ENCODE measurements at regions of chr12 and their contacts with region 1.

Region 1: DNA sequence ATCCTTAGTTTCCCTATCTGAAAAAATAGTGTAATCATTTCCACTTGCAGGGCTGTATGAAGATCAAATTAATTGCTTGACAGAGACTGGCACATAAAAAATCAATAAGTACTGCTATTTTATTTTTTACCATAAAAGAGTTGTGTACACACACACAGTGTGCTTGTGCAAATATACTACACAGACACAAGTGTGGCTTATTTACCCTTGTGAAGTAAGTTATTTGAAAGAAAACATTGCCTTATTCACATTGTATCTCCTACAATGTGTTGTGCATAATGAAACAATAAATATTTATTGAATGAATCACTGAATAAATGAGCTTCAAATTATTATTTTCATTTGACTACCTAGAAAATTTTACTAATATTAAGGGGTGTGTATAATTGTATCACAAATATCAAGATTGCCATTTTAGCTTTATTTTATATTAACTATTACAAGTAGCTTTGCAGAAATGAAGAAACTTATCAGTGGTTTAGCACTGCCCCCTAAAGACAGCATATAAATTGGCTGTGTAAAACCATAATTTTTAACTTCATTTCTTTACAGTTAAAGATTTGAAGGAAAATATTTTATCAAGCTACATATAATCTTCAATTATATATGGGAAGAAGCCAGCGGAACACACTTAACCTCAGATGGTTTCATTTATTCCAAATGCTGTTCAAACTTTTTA is 11.3 kb downstream of the GARIN6 start:
- DNase-seq: peak; percentile 64
- H3K4me3 ChIP-seq: no peak overlapping the region
- H3K27ac ChIP-seq: peak overlapping the region; percentile 62
- H3K4me1 ChIP-seq: peaks cover 41% of the 10 kb centered on the region
- CTCF ChIP-seq: peak; percentile 94

Region 2: DNA sequence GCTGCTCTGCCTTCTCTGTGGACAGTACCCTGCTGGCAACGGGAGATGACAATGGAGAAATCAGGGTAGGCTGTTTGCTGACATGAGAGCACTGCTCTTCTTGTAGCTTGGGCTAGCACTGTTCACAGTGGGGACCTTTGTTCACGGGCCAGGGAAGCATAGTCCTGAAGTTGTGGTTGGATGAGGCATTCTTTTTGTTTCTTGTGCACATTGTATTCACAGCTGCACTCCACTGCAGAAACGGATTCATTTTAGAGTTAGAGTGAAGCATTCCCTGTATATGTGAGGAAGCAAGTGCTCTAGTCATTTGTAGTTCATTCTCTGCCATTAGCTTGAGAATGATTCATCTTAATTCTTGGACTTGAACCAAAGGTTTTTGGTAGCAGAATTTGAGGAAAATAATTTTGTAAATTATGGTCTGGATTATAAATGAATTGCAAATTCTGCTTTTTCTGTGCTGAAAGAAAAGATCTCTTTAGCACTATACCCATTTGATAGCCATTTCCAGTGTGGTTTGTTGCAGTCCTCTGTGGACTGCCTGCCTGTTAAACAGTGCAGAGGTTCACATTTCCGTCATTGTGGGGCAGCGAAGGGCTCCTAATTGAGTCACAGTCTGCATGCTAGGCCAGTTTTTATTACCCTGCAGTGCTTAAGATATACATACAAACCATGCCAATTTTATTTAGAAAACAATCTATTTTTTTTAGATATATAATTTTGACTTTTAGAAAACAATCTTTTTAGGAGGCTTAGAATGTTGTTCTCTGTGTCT is 933.1 kb before region 1 on chr12:
- CTCF ChIA-PET with region 1: no interaction called
- POLR2A ChIA-PET with region 1: no interaction called
- intact Hi-C with region 1: loop called (anchors 10 kb)
- DNase-seq: peak; percentile 56
- H3K4me3 ChIP-seq: no peak overlapping the region
- H3K27ac ChIP-seq: no peak overlapping the region
- H3K4me1 ChIP-seq: no peaks in the 10 kb centered on the region
- CTCF ChIP-seq: peak; percentile 82

Region 3: GRCh38 chr12:99253068-99253467 is 405.7 kb before region 1 on chr12:
- CTCF ChIA-PET with region 1: no interaction called
- POLR2A ChIA-PET with region 1: no interaction called
- intact Hi-C with region 1: loop called (anchors 2 kb)
- DNase-seq: peak; percentile 74
- H3K4me3 ChIP-seq: no peak overlapping the region
- H3K27ac ChIP-seq: no peak overlapping the region
- H3K4me1 ChIP-seq: peaks cover 12% of the 10 kb centered on the region
- CTCF ChIP-seq: peak; percentile 76

Region 4: DNA sequence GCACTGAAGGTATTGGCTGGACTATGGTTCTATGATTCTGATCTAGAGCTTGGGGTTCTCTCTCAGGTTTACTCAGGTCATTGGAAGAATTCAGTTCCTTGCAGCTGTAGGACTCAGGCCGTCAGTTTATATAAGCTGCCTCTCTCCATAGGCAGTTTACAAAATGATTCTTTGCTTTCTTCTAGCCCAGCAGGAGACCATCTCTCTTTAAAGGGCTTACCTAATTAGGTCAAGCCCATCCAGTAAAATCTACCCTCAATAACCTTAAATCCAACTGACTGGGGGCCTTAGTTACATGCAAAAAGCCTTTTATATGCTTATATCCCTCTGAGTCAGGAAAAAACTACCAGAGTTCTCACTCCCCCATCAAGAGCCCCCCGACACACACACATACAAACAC is 91.7 kb before region 1 on chr12:
- CTCF ChIA-PET with region 1: no interaction called
- POLR2A ChIA-PET with region 1: no interaction called
- intact Hi-C with region 1: no loop called
- DNase-seq: no peak
- H3K4me3 ChIP-seq: no peak overlapping the region
- H3K27ac ChIP-seq: no peak overlapping the region
- H3K4me1 ChIP-seq: peaks cover 5% of the 10 kb centered on the region
- CTCF ChIP-seq: no peak

Region 5: GRCh38 chr12:99767809-99768208 is 109.0 kb after region 1 on chr12:
- CTCF ChIA-PET with region 1: no interaction called
- POLR2A ChIA-PET with region 1: interaction called, 4 read pairs
- intact Hi-C with region 1: loop called (anchors 2 kb)
- DNase-seq: peak; percentile 59
- H3K4me3 ChIP-seq: no peak overlapping the region
- H3K27ac ChIP-seq: no peak overlapping the region
- H3K4me1 ChIP-seq: peaks cover 31% of the 10 kb centered on the region
- CTCF ChIP-seq: peak; percentile 89